HCT116 (cell line): ENCODE measurements at regions of chr4 and their contacts with region 1.

Region 1: DNA sequence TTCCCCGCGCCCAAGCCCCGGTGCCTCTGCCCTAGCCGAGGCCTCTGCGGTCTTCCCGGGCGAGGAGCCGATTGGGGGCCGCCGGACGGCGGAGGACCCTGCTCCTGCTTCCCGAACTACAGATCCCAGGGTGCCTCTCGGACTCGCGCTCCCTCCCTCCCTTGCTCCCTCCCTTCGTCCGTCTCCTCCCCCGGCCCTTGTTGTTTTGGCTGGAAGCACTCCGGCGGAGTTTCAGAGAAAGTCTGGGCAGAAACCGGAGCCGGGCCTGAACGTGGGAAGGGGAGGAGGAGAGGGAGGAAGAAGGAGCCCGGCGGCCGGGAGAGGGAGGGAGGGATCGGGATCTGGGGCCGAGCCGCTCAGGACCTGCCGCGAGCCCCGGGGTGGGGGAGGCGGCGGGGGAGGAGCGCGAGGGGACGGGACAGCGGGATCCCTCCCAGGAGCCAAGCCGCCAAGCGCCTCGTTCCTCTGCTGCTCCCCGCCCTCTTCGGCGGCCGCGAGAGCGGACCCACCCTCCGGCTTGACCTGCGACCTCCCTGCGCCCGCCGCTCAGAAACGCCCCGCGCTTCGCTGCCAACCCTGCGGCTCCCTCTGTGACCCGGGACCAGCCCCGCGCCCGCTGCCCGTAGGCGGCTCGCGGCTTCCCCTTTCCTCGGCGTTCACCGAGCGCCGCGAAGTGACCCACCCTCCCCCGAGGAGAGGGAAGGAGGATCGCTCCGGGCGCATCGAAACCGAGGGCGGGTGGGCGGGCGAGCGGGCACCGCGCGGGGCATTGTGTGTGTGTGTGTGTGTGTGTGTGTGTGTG is 496 bp upstream of the GAB1 start:
- DNase-seq: no peak
- ATAC-seq: peak; percentile 80
- H3K4me3 ChIP-seq: peak overlapping the region; percentile 53 to 76
- H3K27ac ChIP-seq: peak overlapping the region; percentile 28; the same call in 1 of the 2 replicates
- H3K4me1 ChIP-seq: peaks cover 3 to 17% of the 10 kb centered on the region in 2 experiments
- H3K27me3 ChIP-seq: peaks cover 14% of the 10 kb centered on the region; the same call in 1 of the 2 replicates
- CTCF ChIP-seq: no peak
- POLR2A ChIP-seq: no peak
- RAD21 ChIP-seq: no peak

Region 2: GRCh38 chr4:142961866-142962265 is 374.3 kb before region 1 on chr4:
- CTCF ChIA-PET with region 1: no interaction called
- POLR2A ChIA-PET with region 1: no interaction called
- RAD21 ChIA-PET with region 1: no interaction called
- intact Hi-C with region 1: no loop called
- DNase-seq: no peak
- ATAC-seq: no peak
- H3K4me3 ChIP-seq: no peak overlapping the region
- H3K27ac ChIP-seq: no peak overlapping the region
- H3K4me1 ChIP-seq: no peaks in the 10 kb centered on the region
- H3K27me3 ChIP-seq: no peaks in the 10 kb centered on the region
- CTCF ChIP-seq: no peak
- POLR2A ChIP-seq: no peak
- RAD21 ChIP-seq: no peak

Region 3: DNA sequence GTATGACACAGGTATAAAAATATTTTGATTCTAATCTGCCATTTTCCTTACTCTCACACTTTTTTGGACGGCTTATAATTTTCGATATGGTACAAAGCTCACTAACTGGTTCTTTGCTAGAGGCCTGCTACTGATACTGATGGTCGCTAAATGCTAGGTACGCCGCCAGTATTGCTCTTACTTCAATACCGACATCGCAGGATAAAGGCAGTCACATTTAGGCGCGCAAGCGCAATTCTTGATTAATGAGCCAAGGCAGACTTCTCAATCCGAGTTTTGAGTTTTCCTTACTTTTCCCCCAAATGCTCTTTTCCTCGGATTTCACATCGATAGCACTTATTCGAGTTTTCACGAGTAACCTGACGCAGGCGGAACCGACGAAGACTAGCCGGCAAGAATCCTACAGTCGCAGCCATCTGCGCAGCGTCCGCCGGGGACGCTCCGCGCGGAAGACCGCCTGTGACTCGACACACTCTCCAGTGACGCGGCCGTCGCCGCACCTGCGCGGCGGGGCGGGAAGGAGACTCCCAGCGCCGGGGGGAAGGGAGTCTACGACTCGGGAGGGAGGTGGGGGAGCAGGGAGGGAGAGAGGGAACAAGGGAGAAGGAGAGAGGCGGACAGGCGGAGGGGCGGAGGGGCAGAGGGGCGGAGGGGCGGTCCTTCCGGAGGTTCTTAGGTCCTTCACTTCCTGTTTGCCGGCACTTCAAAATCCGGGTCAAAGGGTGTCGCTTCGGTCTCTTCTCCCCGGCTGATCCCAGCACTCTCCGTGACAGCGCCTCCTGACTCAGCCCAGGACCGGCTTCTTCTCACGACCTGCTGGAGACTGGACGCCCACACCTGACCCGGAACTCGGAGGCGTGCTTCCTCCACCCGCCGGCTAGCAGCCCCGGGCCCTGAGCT is 151.7 kb before region 1 on chr4 and contains the start of gene USP38:
- CTCF ChIA-PET with region 1: no interaction called
- POLR2A ChIA-PET with region 1: no interaction called
- RAD21 ChIA-PET with region 1: no interaction called
- intact Hi-C with region 1: loop called (anchors 10 kb)
- DNase-seq: peak; percentile 86
- ATAC-seq: peak; percentile 93
- H3K4me3 ChIP-seq: peak within 1 kb of the TSS; percentile 72 to 87
- H3K27ac ChIP-seq: peak within 1 kb of the TSS; percentile 90
- H3K4me1 ChIP-seq: peaks cover 15 to 22% of the 10 kb centered on the region in 2 experiments; a peak in 3 of 4 replicates
- H3K27me3 ChIP-seq: no peaks in the 10 kb centered on the region
- CTCF ChIP-seq: no peak
- POLR2A ChIP-seq: peak; percentile 93
- RAD21 ChIP-seq: no peak
- total RNA-seq, gene USP38: 18.6 TPM

Region 4: GRCh38 chr4:143679434-143679833 is 343.3 kb after region 1 on chr4:
- CTCF ChIA-PET with region 1: no interaction called
- POLR2A ChIA-PET with region 1: no interaction called
- RAD21 ChIA-PET with region 1: no interaction called
- intact Hi-C with region 1: no loop called
- DNase-seq: no peak
- ATAC-seq: no peak
- H3K4me3 ChIP-seq: no peak overlapping the region
- H3K27ac ChIP-seq: no peak overlapping the region
- H3K4me1 ChIP-seq: no peaks in the 10 kb centered on the region
- H3K27me3 ChIP-seq: no peaks in the 10 kb centered on the region
- CTCF ChIP-seq: no peak
- POLR2A ChIP-seq: no peak
- RAD21 ChIP-seq: no peak